Stomach (tissue), 19 donors: ENCODE measurements at regions of chr10 and their contacts with region 1.

Region 1: DNA sequence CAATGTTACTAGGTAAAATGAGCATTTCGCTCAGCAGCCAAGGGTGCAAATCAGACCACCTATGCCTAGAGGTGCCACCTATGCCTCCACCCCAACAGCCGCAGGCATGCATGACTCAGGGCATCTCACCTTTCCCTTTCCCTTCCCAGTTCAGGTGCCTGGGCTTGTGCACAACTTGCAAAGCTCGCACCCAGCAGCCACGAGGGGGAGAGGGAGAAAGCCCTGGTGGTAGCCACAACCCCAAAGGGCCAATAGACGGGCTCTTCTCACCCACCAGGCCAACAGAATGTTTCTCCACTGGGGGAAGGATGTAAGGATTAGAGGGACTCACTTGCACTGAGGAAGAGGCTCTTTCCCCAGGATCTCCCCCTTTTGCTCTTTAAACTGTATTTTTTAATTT is 462.3 kb upstream of the PCDH15 start:
- DNase-seq: no peak
- H3K4me3 ChIP-seq: no peak overlapping the region
- H3K27ac ChIP-seq: no peak overlapping the region
- H3K4me1 ChIP-seq: no peaks in the 10 kb centered on the region
- H3K27me3 ChIP-seq: no peaks in the 10 kb centered on the region
- CTCF ChIP-seq: no peak
- EP300 ChIP-seq: no peak
- POLR2A ChIP-seq: no peak

Region 2: DNA sequence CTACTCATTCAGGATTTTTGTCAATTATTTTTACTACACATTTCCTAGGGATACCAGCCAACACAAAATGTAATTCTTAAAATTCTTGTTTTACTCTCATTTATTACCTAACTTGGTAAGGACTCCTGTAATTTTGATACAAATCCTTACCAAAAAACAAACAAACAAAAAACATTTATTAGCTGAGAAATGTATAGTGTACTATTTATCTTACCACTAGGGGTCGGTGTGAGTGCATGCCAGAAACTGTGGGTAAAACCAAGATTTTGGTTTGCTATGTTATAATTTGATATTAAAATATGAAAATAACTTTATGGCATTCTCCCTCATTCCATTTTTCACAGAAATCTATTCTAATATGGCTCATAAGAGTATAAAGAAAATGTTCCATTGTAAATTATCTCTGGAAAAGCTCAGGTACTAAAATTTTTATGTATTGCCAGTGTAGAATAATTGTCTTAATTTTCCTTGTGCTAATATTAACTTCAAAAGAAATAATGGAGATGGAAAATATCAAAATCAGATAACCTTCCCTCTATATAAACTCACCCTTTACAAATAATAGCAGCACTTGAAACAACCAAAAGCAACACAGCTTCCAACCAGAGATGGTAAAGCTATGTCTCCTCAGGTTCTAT is 171.5 kb before region 1 on chr10:
- intact Hi-C with region 1: loop called (anchors 10 kb)
- DNase-seq: peak in 1 of 2 donors; percentile 26
- H3K4me3 ChIP-seq: no peak overlapping the region
- H3K27ac ChIP-seq: no peak overlapping the region
- H3K4me1 ChIP-seq: no peaks in the 10 kb centered on the region
- H3K27me3 ChIP-seq: no peaks in the 10 kb centered on the region
- CTCF ChIP-seq: peak in 5 of 7 experiments; percentile 27 to 79 (median 49)
- EP300 ChIP-seq: no peak
- POLR2A ChIP-seq: no peak